ENCODE measurements at regions of chrX and their contacts with region 1.

Region 1: GRCh38 chrX:15789979-15790768 is at the start of gene ZRSR2:
- DNase-seq: peak; percentile 76
- ATAC-seq: peak; percentile 93
- H3K4me3 Mint-ChIP-seq: no peak within 1 kb of the TSS
- H3K27ac Mint-ChIP-seq: peak within 1 kb of the TSS; percentile 35
- H3K4me1 Mint-ChIP-seq: peaks cover 18% of the 10 kb centered on the region
- H3K27me3 Mint-ChIP-seq: no peaks in the 10 kb centered on the region
- CTCF ChIP-seq: no peak
- total RNA-seq, gene ZRSR2: 19.8 and 20.9 TPM in 2 replicates

Region 2: DNA sequence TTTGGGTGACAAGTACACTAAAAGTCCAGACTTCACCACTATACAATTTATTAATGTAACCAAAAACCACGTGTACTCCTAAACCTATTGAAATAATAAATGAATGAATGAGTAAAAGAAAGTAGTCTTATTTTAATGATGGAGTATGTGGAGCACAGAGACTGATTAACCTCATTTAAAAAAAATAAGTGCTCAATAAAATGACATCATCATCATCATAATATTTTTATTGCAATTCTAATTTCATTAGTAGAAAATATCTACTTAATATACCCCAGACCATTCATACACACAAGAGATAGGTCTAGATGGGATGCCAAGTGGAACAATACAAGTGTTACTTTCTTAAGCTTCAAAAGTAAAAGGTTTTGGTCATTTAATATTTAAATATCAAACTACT is 653.4 kb before region 1 on chrX:
- CTCF ChIA-PET with region 1: no interaction called
- POLR2A ChIA-PET with region 1: no interaction called
- intact Hi-C with region 1: no loop called
- DNase-seq: no peak
- ATAC-seq: no peak
- H3K4me3 Mint-ChIP-seq: no peak overlapping the region
- H3K27ac Mint-ChIP-seq: no peak overlapping the region
- H3K4me1 Mint-ChIP-seq: no peaks in the 10 kb centered on the region
- H3K27me3 Mint-ChIP-seq: no peaks in the 10 kb centered on the region
- CTCF ChIP-seq: no peak

Region 3: GRCh38 chrX:15686818-15687685 is 103.1 kb before region 1 on chrX:
- CTCF ChIA-PET with region 1: interaction called, 4 read pairs
- POLR2A ChIA-PET with region 1: no interaction called
- intact Hi-C with region 1: loop called (anchors 2 kb)
- DNase-seq: no peak
- ATAC-seq: peak; percentile 89
- H3K4me3 Mint-ChIP-seq: no peak overlapping the region
- H3K27ac Mint-ChIP-seq: no peak overlapping the region
- H3K4me1 Mint-ChIP-seq: peaks cover 3% of the 10 kb centered on the region
- H3K27me3 Mint-ChIP-seq: no peaks in the 10 kb centered on the region
- CTCF ChIP-seq: no peak

Region 4: GRCh38 chrX:15749642-15750610 is 40.2 kb before region 1 on chrX:
- CTCF ChIA-PET with region 1: no interaction called
- POLR2A ChIA-PET with region 1: interaction called, 5 read pairs
- intact Hi-C with region 1: loop called (anchors 2 kb)
- DNase-seq: no peak
- ATAC-seq: peak; percentile 78
- H3K4me3 Mint-ChIP-seq: peak overlapping the region; percentile 58
- H3K27ac Mint-ChIP-seq: peak overlapping the region; percentile 98
- H3K4me1 Mint-ChIP-seq: peaks cover 58% of the 10 kb centered on the region
- H3K27me3 Mint-ChIP-seq: no peaks in the 10 kb centered on the region
- CTCF ChIP-seq: no peak

Region 5: DNA sequence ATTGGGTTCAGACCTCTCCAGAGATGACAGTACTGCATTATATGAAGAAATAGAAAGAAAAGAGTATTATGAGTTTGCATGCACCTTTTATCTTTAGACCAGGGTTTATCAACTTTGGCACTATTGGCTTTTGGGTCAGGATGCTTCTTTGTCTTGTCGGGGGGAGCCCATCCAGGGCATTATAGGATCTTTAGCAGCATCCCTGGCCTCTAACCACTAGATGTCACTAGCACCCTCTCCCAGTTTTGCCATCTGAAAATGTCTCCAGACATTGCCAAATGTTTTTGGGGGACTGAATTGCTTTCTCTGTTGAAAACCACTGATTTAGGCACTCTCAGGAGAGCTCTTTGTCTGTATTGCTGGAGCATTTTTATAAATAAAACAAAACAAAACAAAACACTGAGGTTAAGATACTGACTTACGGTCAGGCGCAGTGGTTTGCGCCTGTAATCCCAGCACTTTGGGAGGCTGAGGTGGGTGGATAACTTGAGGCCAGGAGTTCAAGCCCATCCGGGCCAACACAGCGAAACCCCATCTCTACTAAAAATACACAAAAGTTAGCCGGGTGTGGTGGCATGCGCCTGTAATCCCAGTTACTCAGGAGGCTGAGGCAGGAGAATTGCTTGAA is 28.5 kb before region 1 on chrX:
- CTCF ChIA-PET with region 1: no interaction called
- POLR2A ChIA-PET with region 1: interaction called, 3 read pairs
- intact Hi-C with region 1: loop called (anchors 2 kb)
- DNase-seq: no peak
- ATAC-seq: peak; percentile 37
- H3K4me3 Mint-ChIP-seq: no peak overlapping the region
- H3K27ac Mint-ChIP-seq: peak overlapping the region; percentile 50
- H3K4me1 Mint-ChIP-seq: peaks cover 10% of the 10 kb centered on the region
- H3K27me3 Mint-ChIP-seq: no peaks in the 10 kb centered on the region
- CTCF ChIP-seq: no peak

Region 6: DNA sequence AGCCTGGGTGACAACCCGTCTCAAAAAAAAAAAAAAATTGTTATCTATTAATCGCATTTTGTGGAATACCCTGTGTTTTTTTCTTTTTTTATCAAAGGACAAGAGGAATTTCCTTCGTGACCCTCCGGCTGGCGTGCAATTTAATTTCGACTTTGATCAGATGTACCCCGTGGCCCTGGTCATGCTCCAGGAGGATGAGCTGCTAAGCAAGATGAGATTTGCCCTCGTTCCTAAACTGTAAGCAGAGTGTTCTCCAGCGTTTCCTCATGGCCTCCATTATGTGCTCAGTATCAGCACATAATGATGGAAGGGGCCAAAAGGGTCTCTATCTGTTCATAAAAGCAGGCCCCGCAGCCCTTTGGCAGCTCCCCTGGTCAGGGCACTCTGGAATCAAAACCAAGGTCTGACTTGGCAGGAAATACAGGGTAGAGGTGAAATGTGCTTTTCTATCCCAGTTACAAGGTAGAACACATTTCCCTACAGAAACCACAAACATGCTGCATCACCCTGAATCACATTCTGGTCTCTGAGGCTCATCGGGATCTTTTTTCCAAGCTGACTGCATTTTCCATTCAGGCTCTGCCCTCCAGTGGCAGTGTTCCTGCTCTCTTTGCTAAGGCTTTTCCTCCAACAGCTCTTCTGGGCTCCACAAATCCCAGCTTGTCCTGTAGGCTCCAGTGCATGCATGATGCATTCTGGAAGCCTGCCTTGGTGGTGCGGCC is 953.6 kb after region 1 on chrX:
- CTCF ChIA-PET with region 1: no interaction called
- POLR2A ChIA-PET with region 1: no interaction called
- intact Hi-C with region 1: no loop called
- DNase-seq: no peak
- ATAC-seq: no peak
- H3K4me3 Mint-ChIP-seq: no peak overlapping the region
- H3K27ac Mint-ChIP-seq: no peak overlapping the region
- H3K4me1 Mint-ChIP-seq: no peaks in the 10 kb centered on the region
- H3K27me3 Mint-ChIP-seq: no peaks in the 10 kb centered on the region
- CTCF ChIP-seq: no peak